HepG2 (cell line): ENCODE measurements at regions of chr10 and their contacts with region 1.

Region 1: DNA sequence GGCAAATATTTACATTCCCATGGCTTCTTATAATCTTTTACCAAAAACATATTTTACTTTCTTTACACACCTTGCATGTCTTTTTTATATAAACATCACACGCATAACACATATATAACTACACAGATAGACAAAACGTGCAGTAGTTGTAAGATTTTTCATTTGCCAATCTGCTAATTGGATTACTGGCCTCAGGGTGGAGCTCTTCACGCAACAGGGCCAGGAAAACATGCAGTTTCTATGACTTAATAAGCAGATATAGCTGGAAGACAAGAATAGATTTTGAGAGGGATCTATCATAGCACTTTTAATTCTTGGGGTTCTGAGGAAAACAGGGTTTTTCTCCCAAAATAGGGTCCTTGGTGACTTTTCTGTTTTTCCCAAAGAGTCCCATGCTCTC is 12.7 kb downstream of the ACADSB start:
- DNase-seq: peak; percentile 36
- ATAC-seq: no peak
- H3K4me3 ChIP-seq: peak overlapping the region in 2 of 3 experiments; percentile 22 to 33; a peak in 2 of 6 replicates
- H3K27ac ChIP-seq: peak overlapping the region; percentile 87
- H3K4me1 ChIP-seq: peaks cover 96% of the 10 kb centered on the region
- H3K27me3 ChIP-seq: no peaks in the 10 kb centered on the region
- CTCF ChIP-seq: peak; percentile 61
- EP300 ChIP-seq: no peak; a peak in 1 of 4 replicates
- POLR2A ChIP-seq: no peak
- RAD21 ChIP-seq: 0 out of 2 replicates have a peak, but pooled peaks have one; percentile 18

Region 2: DNA sequence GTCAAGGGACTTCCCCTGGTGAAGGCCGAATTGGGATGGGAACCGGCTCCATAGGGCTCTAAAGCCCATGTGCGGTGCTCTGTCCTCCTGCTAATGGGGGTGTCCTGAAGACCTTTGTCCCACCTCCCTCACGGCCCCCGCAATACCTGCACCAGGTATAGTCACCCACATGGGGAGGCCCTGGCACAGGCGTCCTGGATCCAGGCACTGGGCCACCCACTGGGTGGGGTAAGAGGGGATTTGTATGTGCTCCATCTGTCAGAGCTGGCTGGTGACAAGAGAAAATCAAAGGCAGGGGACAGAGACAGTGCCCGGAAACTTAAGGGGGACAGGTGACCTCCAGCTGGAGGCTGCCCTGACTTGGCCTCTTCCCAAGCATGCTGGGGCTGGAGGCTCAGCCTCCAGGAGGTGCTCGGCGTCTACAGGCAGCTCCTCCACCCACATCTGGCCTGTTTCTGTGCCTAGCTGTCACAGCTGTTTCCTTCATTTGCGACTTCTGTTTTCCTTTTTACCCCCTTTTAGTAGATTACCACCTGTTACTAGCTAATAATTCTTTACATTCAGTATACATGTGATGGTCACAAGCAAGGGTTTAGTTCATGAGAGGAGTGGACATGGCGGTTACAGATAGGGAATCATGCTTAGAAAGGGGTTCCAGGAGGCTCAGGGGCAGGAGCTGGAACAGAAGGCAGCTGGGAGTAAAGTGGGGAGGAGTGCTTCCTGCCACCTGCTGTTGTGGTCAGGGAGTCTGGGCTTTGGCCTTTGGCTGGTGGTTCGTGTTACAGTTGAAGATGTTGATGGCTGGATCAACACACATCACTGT is 173.5 kb before region 1 on chr10:
- CTCF ChIA-PET with region 1: no interaction called
- POLR2A ChIA-PET with region 1: no interaction called
- in situ Hi-C with region 1: no loop called
- intact Hi-C with region 1: no loop called
- DNase-seq: no peak
- ATAC-seq: no peak
- H3K4me3 ChIP-seq: no peak overlapping the region
- H3K27ac ChIP-seq: no peak overlapping the region
- H3K4me1 ChIP-seq: no peaks in the 10 kb centered on the region
- H3K27me3 ChIP-seq: no peaks in the 10 kb centered on the region
- CTCF ChIP-seq: no peak
- EP300 ChIP-seq: no peak
- POLR2A ChIP-seq: no peak
- RAD21 ChIP-seq: no peak

Region 3: GRCh38 chr10:122980209-122981065 is 41.1 kb before region 1 on chr10 and contains the start of gene PSTK:
- CTCF ChIA-PET with region 1: no interaction called
- POLR2A ChIA-PET with region 1: interaction called, 17 read pairs
- in situ Hi-C with region 1: no loop called
- intact Hi-C with region 1: no loop called
- DNase-seq: peak; percentile 81
- ATAC-seq: peak; percentile 96
- H3K4me3 ChIP-seq: peak within 1 kb of the TSS; percentile 72 to 95 (median 72)
- H3K27ac ChIP-seq: peak within 1 kb of the TSS; percentile 97
- H3K4me1 ChIP-seq: peaks cover 28% of the 10 kb centered on the region
- H3K27me3 ChIP-seq: no peaks in the 10 kb centered on the region; a peak in 1 of 5 replicates
- CTCF ChIP-seq: peak; percentile 96
- EP300 ChIP-seq: 0 out of 4 replicates have a peak, but pooled peaks of 1 of the 2 experiments have one; percentile 16
- POLR2A ChIP-seq: peak; percentile 81 to 92
- RAD21 ChIP-seq: peak; percentile 71
- total RNA-seq, gene PSTK: 9.3 and 9.8 TPM in 2 replicates

Region 4: DNA sequence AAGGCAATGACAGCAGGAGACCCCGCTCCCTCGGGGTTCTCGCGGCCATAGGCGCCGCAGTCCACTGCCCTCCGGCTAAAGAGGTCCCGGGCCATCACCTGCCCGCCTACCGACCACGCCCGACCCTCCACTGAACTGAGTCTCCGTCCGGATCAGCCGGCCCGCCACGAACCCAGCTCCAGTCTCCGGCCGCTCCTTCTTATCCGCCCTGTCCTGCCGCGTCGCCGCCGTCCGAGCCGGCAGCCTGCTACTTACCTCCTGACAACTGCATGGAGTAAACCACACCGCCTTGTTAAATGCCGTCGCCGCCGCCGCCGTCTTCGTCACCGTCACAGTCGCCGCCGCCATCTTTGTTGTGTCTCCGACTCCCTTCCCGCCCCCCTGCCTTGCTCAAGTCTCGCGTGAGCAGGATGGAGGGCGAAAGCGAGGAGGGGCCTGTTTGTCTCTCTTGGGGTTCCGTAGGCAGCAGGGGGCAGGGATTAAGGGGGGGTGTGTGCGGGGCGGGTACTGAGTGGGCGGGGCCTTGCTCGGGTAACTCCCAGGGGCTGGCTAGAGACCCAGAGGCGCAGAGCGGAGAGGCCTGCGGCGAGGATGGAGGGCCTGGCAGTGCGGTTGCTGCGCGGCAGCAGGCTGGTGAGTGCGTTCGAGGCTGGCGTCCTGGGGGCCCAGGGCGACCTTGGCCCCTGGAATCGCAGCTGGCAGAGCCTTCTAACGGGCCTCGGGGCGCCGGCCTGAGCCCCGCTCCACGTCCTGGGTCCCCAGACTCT is 12.9 kb before region 1 on chr10 and contains the starts of genes ACADSB and IKZF5:
- CTCF ChIA-PET with region 1: no interaction called
- POLR2A ChIA-PET with region 1: interaction called, 131 read pairs
- in situ Hi-C with region 1: no loop called
- intact Hi-C with region 1: loop called (anchors 1 kb)
- DNase-seq: peak; percentile 95
- ATAC-seq: peak; percentile 96
- H3K4me3 ChIP-seq: peak within 1 kb of the TSS; percentile 96 to 99 (median 99)
- H3K27ac ChIP-seq: peak within 1 kb of the TSS; percentile 80
- H3K4me1 ChIP-seq: peaks cover 52% of the 10 kb centered on the region
- H3K27me3 ChIP-seq: no peaks in the 10 kb centered on the region; a peak in 1 of 5 replicates
- CTCF ChIP-seq: no peak
- EP300 ChIP-seq: 0 out of 4 replicates have a peak, but pooled peaks of 1 of the 2 experiments have one; percentile 43
- POLR2A ChIP-seq: peak; percentile 99 to 100
- RAD21 ChIP-seq: peak; percentile 64; the same call in 1 of the 2 replicates
- total RNA-seq, gene ACADSB: 80.0 and 186 TPM in 2 replicates
- total RNA-seq, gene IKZF5: 3.7 and 4.1 TPM in 2 replicates

Region 5: DNA sequence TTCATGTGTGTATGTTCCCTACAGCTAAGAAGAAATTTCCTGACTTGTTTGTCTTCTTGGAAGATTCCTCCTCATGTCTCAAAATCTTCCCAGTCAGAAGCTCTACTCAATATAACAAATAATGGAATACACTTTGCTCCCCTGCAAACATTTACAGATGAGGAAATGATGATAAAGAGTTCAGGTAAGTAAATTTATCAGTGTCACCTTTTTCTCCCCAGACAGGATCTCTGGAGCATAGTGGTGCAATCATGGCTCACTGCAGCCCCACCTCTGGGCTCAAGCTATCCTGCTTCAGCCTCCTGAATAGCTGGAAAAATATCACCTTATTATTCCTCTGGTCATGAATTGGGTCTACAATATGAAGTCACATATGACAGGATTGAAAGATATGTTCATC is 12.8 kb after region 1 on chr10:
- CTCF ChIA-PET with region 1: no interaction called
- POLR2A ChIA-PET with region 1: interaction called, 31 read pairs
- in situ Hi-C with region 1: no loop called
- intact Hi-C with region 1: loop called (anchors 2 kb)
- DNase-seq: peak; percentile 21
- ATAC-seq: peak; percentile 63
- H3K4me3 ChIP-seq: no peak overlapping the region
- H3K27ac ChIP-seq: peak overlapping the region; percentile 63
- H3K4me1 ChIP-seq: peaks cover 9% of the 10 kb centered on the region
- H3K27me3 ChIP-seq: no peaks in the 10 kb centered on the region
- CTCF ChIP-seq: no peak
- EP300 ChIP-seq: peak in 1 of 2 experiments; percentile 79; a peak in 2 of 4 replicates
- POLR2A ChIP-seq: no peak
- RAD21 ChIP-seq: no peak